Activated naive CD4-positive, alpha-beta T cell treated with anti-CD3 and anti-CD28 coated beads for 36 hours (primary cell): ENCODE measurements at regions of chr1 and their contacts with region 1.

Region 1: GRCh38 chr1:33127001-33127791 is 46.2 kb downstream of the AZIN2 start:
- DNase-seq: peak; percentile 99
- H3K4me3 Mint-ChIP-seq: peak overlapping the region; percentile 94
- H3K27ac Mint-ChIP-seq: peak overlapping the region; percentile 91
- H3K4me1 Mint-ChIP-seq: peaks cover 39% of the 10 kb centered on the region
- H3K27me3 Mint-ChIP-seq: no peaks in the 10 kb centered on the region

Region 2: GRCh38 chr1:32817159-32817814 is 309.9 kb before region 1 on chr1 and contains the starts of genes S100PBP and YARS1:
- CTCF ChIA-PET with region 1: no interaction called
- intact Hi-C with region 1: loop called (anchors 2 kb)
- DNase-seq: peak; percentile 100
- H3K4me3 Mint-ChIP-seq: peak within 1 kb of the TSS; percentile 92
- H3K27ac Mint-ChIP-seq: peak within 1 kb of the TSS; percentile 94
- H3K4me1 Mint-ChIP-seq: peaks cover 51% of the 10 kb centered on the region
- H3K27me3 Mint-ChIP-seq: no peaks in the 10 kb centered on the region
- total RNA-seq, gene S100PBP: 26.1 to 31.2 TPM
- total RNA-seq, gene YARS1: 293 to 312 TPM

Region 3: DNA sequence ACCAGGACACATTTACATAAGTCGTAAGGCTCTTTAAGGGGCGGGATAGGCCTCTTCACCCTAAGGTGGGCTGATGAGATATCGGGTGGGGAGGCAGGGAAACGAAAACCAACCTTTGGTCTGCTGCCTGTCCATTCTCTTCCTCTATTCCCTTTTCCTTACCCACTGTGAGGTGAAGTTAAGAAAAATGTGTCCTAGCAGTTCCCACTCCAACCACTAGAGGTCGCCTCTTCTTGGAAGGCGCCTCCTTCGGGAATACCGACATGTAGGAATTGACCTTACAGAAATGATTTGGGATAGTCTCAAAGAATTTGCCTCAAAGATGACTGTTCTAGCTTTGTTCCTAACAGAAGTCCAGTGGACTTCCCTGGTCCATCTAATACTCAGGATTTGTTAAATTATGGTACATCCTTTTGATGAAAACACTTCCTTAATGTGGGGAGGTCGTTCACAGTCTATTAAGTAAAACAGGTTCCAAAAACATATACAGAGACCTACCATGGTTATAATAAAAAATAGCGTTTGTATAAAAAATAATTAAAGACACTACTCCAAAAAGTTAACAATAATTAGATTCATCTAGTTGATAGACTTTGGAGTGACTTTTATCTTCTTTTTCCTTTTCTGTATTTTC is 32.1 kb before region 1 on chr1:
- CTCF ChIA-PET with region 1: interaction called, 7 read pairs
- intact Hi-C with region 1: loop called (anchors 1 kb)
- DNase-seq: peak; percentile 40
- H3K4me3 Mint-ChIP-seq: no peak overlapping the region
- H3K27ac Mint-ChIP-seq: no peak overlapping the region
- H3K4me1 Mint-ChIP-seq: peaks cover 28% of the 10 kb centered on the region
- H3K27me3 Mint-ChIP-seq: no peaks in the 10 kb centered on the region

Region 4: DNA sequence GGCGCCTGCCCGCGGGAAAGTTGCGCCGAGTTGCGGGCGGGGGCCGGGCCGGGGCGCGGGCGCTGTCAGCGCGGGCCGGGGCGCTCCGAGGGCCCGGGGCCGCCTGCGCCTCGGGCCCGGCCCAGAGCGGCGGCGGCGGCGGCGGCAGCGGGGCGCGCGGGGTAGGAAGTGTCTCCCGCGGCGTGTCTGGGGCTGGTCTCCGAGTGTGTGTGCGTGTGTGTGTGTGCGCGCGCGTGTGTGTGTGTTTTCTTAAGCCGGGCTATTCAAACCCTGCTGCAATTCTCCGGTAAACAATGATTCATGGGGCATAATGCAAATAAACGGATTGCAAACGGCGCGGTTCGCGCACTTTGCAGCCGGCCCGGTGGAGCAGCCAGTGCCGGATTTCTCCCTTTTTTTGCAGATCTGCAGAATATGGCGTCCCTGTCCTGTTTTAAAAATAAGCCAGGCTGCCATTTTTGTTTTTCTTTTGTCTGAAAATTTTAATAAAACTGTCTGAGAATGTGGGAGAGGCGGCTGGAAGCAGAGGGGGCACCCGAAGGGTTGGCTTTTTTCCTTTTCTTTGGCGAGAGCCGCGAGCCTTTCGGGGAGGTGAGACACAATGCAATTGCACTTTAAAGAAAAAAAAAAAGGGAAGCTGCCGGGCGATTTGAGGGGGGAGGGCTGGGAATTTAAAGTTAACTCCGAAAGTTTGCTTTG is 129.7 kb after region 1 on chr1:
- CTCF ChIA-PET with region 1: no interaction called
- intact Hi-C with region 1: loop called (anchors 1 kb)
- DNase-seq: peak; percentile 54
- H3K4me3 Mint-ChIP-seq: peak overlapping the region; percentile 96
- H3K27ac Mint-ChIP-seq: peak overlapping the region; percentile 91
- H3K4me1 Mint-ChIP-seq: peaks cover 35% of the 10 kb centered on the region
- H3K27me3 Mint-ChIP-seq: no peaks in the 10 kb centered on the region

Region 5: GRCh38 chr1:33430692-33431593 is 303.7 kb after region 1 on chr1 and contains the start of gene PHC2:
- CTCF ChIA-PET with region 1: no interaction called
- intact Hi-C with region 1: loop called (anchors 2 kb)
- DNase-seq: peak; percentile 95
- H3K4me3 Mint-ChIP-seq: peak within 1 kb of the TSS; percentile 62
- H3K27ac Mint-ChIP-seq: no peak within 1 kb of the TSS
- H3K4me1 Mint-ChIP-seq: peaks cover 2% of the 10 kb centered on the region
- H3K27me3 Mint-ChIP-seq: peaks cover 5% of the 10 kb centered on the region
- total RNA-seq, gene PHC2: 15.6 to 15.9 TPM